Heart right ventricle (tissue), 16 donors: ENCODE measurements at regions of chr3 and their contacts with region 1.

Region 1: DNA sequence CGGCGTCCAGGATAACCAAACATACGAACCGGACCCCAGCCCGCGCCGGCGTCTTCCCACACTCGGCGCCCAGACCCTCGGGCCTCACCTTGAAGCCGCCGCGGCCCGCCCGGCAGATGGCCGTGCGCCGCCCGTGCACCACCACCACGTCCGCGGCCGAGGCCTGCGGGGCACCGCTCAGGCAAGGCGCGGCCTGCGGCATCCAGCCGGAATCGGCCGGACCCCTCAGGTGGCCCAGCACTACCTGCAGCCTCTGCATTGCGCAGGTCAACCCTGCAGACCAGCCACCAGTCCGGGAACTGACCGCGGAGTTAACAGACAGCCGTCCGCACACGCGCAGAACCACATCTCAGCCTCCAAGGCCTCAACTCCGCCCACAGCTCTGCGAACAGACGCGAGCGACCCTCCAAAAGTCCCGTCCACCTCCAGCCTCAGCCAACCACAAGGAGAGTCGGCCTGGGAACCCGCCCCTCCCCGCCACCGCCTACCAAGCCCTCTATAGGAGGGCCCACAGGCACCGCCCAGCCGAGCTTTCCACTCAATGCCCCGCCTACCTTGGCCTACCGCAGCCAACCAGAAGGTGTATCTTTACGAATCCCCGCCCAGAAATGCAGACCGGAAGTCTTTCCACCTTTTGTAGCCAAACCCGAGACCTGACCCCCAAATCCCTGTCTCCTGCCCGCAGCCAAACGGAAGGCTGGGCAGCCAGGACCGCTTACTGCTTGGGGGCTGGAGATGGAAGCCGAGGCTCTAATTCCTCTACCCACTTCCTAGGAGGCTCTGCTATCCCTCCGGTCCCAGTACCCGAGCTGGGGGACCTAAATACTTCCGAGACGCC is at the start of gene ACAA1:
- DNase-seq: peak; percentile 99 to 100
- ATAC-seq: peak; percentile 96 to 98 (median 98)
- H3K4me3 ChIP-seq: peak within 1 kb of the TSS; percentile 63 to 100 (median 94)
- H3K27ac ChIP-seq: peak within 1 kb of the TSS; percentile 86 to 97 (median 94)
- H3K4me1 ChIP-seq: peaks cover 8 to 58% (median 42%) of the 10 kb centered on the region in 9 donors
- H3K27me3 ChIP-seq: no peaks in the 10 kb centered on the region
- CTCF ChIP-seq: peak in 3 of 9 donors; percentile 3 to 20 (median 9)
- total RNA-seq, gene ACAA1: 102 to 136 (median 117) TPM

Region 2: GRCh38 chr3:38084334-38085310 is 52.4 kb before region 1 on chr3:
- intact Hi-C with region 1: no loop called
- DNase-seq: no peak
- ATAC-seq: peak in 7 of 8 donors; percentile 11 to 99 (median 74)
- H3K4me3 ChIP-seq: no peak overlapping the region
- H3K27ac ChIP-seq: no peak overlapping the region
- H3K4me1 ChIP-seq: no peaks in the 10 kb centered on the region
- H3K27me3 ChIP-seq: no peaks in the 10 kb centered on the region
- CTCF ChIP-seq: no peak

Region 3: DNA sequence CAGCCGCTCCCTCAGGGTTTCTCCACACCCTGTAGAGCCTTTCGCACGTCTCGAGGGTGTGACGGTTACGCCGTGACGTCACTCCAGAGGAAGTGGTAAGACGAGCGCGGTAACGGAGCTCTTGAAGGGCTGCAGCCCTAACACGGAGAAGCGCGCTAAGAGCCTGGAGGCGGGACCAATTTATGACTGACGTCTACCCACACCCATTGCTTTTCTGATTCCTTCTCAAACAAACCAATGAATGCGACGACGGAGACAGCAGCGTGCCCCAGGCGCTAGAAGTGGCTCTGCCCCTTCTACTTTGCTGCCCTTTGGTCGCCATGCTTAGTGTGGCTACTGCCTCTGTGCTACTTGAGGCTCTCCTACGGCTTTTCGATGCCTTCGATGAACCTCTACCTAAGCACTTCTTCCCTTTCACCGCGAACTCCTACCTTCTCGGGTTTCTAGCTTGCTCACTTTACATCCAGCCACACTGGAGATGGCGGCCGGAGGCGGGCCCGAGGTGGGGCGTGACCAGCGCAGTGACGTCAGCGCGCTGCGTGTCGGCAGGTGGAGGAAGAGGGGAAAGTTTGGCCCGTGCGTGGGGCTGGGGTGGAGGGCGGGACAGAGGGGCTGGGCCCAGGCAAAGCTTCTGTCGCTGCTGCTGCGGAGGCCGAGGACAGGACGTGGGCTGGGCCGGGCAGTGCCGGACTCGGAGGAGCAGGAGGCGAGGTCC is 28.1 kb after region 1 on chr3 and contains the start of gene OXSR1:
- intact Hi-C with region 1: loop called in 7 of 10 experiments (anchors 1 to 2 kb)
- DNase-seq: peak; percentile 97 to 99
- ATAC-seq: peak; percentile 94 to 98 (median 97)
- H3K4me3 ChIP-seq: peak within 1 kb of the TSS; percentile 88 to 99 (median 95)
- H3K27ac ChIP-seq: peak within 1 kb of the TSS; percentile 92 to 99 (median 98)
- H3K4me1 ChIP-seq: peaks cover 3 to 43% (median 26%) of the 10 kb centered on the region in 9 donors
- H3K27me3 ChIP-seq: no peaks in the 10 kb centered on the region
- CTCF ChIP-seq: no peak
- total RNA-seq, gene OXSR1: 27.3 to 38.4 (median 31.6) TPM

Region 4: GRCh38 chr3:38247366-38248035 is 110.5 kb after region 1 on chr3:
- intact Hi-C with region 1: loop called in 5 of 10 experiments (anchors 10 kb)
- DNase-seq: peak in 1 of 2 donors; percentile 21
- ATAC-seq: peak; percentile 76 to 98 (median 85)
- H3K4me3 ChIP-seq: no peak overlapping the region
- H3K27ac ChIP-seq: no peak overlapping the region
- H3K4me1 ChIP-seq: peaks cover 0 to 13% (median 6%) of the 10 kb centered on the region in 9 donors
- H3K27me3 ChIP-seq: no peaks in the 10 kb centered on the region
- CTCF ChIP-seq: peak in 5 of 9 donors; percentile 10 to 25 (median 23)

Region 5: GRCh38 chr3:38346587-38347410 is 209.8 kb after region 1 on chr3 and contains the start of gene XYLB:
- intact Hi-C with region 1: loop called in 2 of 10 experiments (anchors 10 kb)
- DNase-seq: peak; percentile 79 to 89
- ATAC-seq: peak; percentile 96 to 100 (median 99)
- H3K4me3 ChIP-seq: peak within 1 kb of the TSS; percentile 27 to 87 (median 82)
- H3K27ac ChIP-seq: peak within 1 kb of the TSS in 6 of 10 donors; percentile 29 to 75 (median 48)
- H3K4me1 ChIP-seq: peaks cover 0 to 22% (median 9%) of the 10 kb centered on the region in 9 donors
- H3K27me3 ChIP-seq: no peaks in the 10 kb centered on the region
- CTCF ChIP-seq: peak; percentile 68 to 95 (median 87)
- total RNA-seq, gene XYLB: 0.42 to 1.7 (median 0.73) TPM

Region 6: DNA sequence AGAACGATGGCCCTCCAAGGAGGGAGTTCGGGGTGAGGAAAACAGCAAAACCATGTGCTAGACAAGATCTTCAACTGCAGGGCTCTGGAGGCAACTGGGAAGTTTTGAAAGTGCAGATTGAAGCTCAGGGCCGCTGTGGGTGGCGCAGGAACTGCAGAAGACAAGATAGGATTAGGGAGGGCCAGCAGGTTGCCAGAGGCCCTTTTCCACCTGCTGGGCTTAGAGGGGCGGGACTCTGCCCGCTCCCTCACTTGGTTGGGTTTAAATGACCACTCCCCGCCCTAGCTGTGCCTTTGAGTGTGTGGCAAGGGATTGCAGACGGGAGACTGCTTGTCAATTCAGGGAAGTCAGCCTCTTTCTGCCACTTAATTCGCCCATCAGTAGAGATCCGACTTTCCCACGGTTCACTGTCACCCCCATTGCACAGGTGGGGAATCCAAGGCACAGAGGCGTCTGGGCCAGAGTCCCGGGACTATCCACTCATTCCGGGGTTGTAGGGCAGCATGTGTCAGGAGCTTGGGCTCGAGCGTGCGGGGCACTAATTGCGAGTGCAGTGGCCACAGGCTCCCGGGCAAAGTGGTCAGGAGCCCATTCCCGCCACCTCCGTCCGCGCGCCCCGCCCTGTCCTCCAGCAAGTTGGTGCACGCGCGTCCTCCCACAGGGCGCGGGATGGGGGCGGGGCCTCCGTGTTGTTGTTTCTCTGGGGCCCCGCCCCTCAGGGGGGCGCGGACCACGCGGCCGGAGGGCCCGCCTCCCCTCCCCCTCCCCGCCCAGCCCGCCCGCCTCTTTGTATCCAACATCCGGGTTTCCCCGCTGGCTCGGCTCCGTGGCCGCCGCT is 316.3 kb after region 1 on chr3 and contains the start of gene ACVR2B:
- intact Hi-C with region 1: loop called in 2 of 10 experiments (anchors 10 kb)
- DNase-seq: peak; percentile 90 to 92
- ATAC-seq: peak; percentile 88 to 93 (median 92)
- H3K4me3 ChIP-seq: peak within 1 kb of the TSS; percentile 68 to 98 (median 85)
- H3K27ac ChIP-seq: peak within 1 kb of the TSS; percentile 70 to 92 (median 86)
- H3K4me1 ChIP-seq: peaks cover 4 to 40% (median 26%) of the 10 kb centered on the region in 9 donors
- H3K27me3 ChIP-seq: peaks cover 0 to 29% (median 0%) of the 10 kb centered on the region in 7 donors
- CTCF ChIP-seq: no peak
- total RNA-seq, gene ACVR2B: 3.7 to 7.6 (median 6.3) TPM

Region 7: GRCh38 chr3:38479431-38480092 is 342.6 kb after region 1 on chr3:
- intact Hi-C with region 1: loop called in 1 of 10 experiments (anchors 10 kb)
- DNase-seq: peak; percentile 42 to 67
- ATAC-seq: peak; percentile 76 to 90 (median 83)
- H3K4me3 ChIP-seq: no peak overlapping the region
- H3K27ac ChIP-seq: no peak overlapping the region
- H3K4me1 ChIP-seq: no peaks in the 10 kb centered on the region
- H3K27me3 ChIP-seq: no peaks in the 10 kb centered on the region
- CTCF ChIP-seq: peak; percentile 81 to 94 (median 91)